Endothelial cell of umbilical vein (primary cell): ENCODE measurements at regions of chr17 and their contacts with region 1.

Region 1: GRCh38 chr17:8745586-8746500 is 1.2 kb upstream of the CCDC42 start:
- DNase-seq: peak; percentile 62
- H3K4me3 ChIP-seq: peak overlapping the region; percentile 23 to 58 (median 30)
- H3K27ac ChIP-seq: no peak overlapping the region
- H3K4me1 ChIP-seq: peaks cover 5% of the 10 kb centered on the region
- H3K27me3 ChIP-seq: peaks cover 12 to 13% of the 10 kb centered on the region in 2 experiments
- CTCF ChIP-seq: peak; percentile 51 to 86
- POLR2A ChIP-seq: no peak

Region 2: GRCh38 chr17:8409966-8410864 is 335.6 kb before region 1 on chr17:
- CTCF ChIA-PET with region 1: interaction called, 101 read pairs
- POLR2A ChIA-PET with region 1: no interaction called
- dilution Hi-C with region 1: no loop called
- intact Hi-C with region 1: loop called (anchors 1 kb)
- DNase-seq: peak; percentile 84
- H3K4me3 ChIP-seq: no peak overlapping the region
- H3K27ac ChIP-seq: no peak overlapping the region
- H3K4me1 ChIP-seq: no peaks in the 10 kb centered on the region
- H3K27me3 ChIP-seq: peaks cover 4 to 9% of the 10 kb centered on the region in 2 experiments
- CTCF ChIP-seq: peak; percentile 81 to 86
- POLR2A ChIP-seq: no peak

Region 3: GRCh38 chr17:8435245-8436168 is 310.3 kb before region 1 on chr17 and contains the start of gene NDEL1:
- CTCF ChIA-PET with region 1: interaction called, 12 read pairs
- POLR2A ChIA-PET with region 1: no interaction called
- dilution Hi-C with region 1: no loop called
- intact Hi-C with region 1: no loop called
- DNase-seq: peak; percentile 98
- H3K4me3 ChIP-seq: peak within 1 kb of the TSS; percentile 77 to 97 (median 93)
- H3K27ac ChIP-seq: peak within 1 kb of the TSS; percentile 86
- H3K4me1 ChIP-seq: peaks cover 12% of the 10 kb centered on the region
- H3K27me3 ChIP-seq: no peaks in the 10 kb centered on the region
- CTCF ChIP-seq: no peak
- POLR2A ChIP-seq: peak; percentile 95
- total RNA-seq, gene NDEL1: 60.0 and 65.7 TPM in 2 replicates

Region 4: GRCh38 chr17:8572764-8573163 is 173.1 kb before region 1 on chr17:
- CTCF ChIA-PET with region 1: interaction called, 40 read pairs
- POLR2A ChIA-PET with region 1: no interaction called
- dilution Hi-C with region 1: no loop called
- intact Hi-C with region 1: loop called (anchors 1 kb)
- DNase-seq: peak; percentile 8
- H3K4me3 ChIP-seq: no peak overlapping the region
- H3K27ac ChIP-seq: no peak overlapping the region
- H3K4me1 ChIP-seq: no peaks in the 10 kb centered on the region
- H3K27me3 ChIP-seq: no peaks in the 10 kb centered on the region
- CTCF ChIP-seq: no peak
- POLR2A ChIP-seq: no peak

Region 5: GRCh38 chr17:8681170-8681949 is 64.5 kb before region 1 on chr17:
- CTCF ChIA-PET with region 1: interaction called, 10 read pairs
- POLR2A ChIA-PET with region 1: no interaction called
- dilution Hi-C with region 1: no loop called
- intact Hi-C with region 1: no loop called
- DNase-seq: peak; percentile 98
- H3K4me3 ChIP-seq: no peak overlapping the region
- H3K27ac ChIP-seq: peak overlapping the region; percentile 57
- H3K4me1 ChIP-seq: peaks cover 17% of the 10 kb centered on the region
- H3K27me3 ChIP-seq: peaks cover 2 to 4% of the 10 kb centered on the region in 2 experiments
- CTCF ChIP-seq: no peak
- POLR2A ChIP-seq: no peak

Region 6: GRCh38 chr17:8732406-8733085 is 13.3 kb before region 1 on chr17:
- CTCF ChIA-PET with region 1: interaction called, 21 read pairs
- POLR2A ChIA-PET with region 1: no interaction called
- dilution Hi-C with region 1: no loop called
- intact Hi-C with region 1: no loop called
- DNase-seq: no peak
- H3K4me3 ChIP-seq: no peak overlapping the region
- H3K27ac ChIP-seq: no peak overlapping the region
- H3K4me1 ChIP-seq: no peaks in the 10 kb centered on the region
- H3K27me3 ChIP-seq: peaks cover 0 to 6% of the 10 kb centered on the region in 2 experiments
- CTCF ChIP-seq: no peak
- POLR2A ChIP-seq: no peak